ENCODE measurements at regions of chr3 and their contacts with region 1.

Region 1: GRCh38 chr3:39255503-39256325 is 24.1 kb downstream of the CX3CR1 start:
- H3K4me3 Mint-ChIP-seq: no peak overlapping the region
- H3K27ac Mint-ChIP-seq: peak overlapping the region; percentile 78
- H3K4me1 Mint-ChIP-seq: peaks cover 81% of the 10 kb centered on the region
- H3K27me3 Mint-ChIP-seq: peaks cover 30% of the 10 kb centered on the region

Region 2: DNA sequence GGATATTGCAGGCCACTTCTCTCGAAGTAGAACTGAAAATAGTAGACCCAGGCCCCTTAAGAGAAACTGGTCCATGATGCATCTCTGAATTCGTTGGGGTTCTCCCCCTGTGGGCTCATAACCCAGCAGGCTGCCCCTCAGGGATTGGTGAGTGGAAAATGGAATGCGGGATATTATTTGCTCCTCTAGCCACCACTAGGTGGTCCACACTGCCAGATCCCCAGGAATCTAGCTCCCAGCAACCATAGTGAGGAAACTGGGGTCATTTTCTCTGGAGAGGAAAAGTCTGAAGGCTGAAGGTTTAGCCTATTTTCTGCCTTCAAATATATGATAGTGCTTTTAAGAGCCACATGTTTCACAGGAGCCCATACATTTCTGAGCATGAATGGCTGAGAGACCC is 17.4 kb after region 1 on chr3:
- intact Hi-C with region 1: loop called (anchors 2 kb)
- H3K4me3 Mint-ChIP-seq: no peak overlapping the region
- H3K27ac Mint-ChIP-seq: peak overlapping the region; percentile 59
- H3K4me1 Mint-ChIP-seq: peaks cover 74% of the 10 kb centered on the region
- H3K27me3 Mint-ChIP-seq: no peaks in the 10 kb centered on the region